GM12878 (cell line): ENCODE measurements at regions of chr15 and their contacts with region 1.

Region 1: GRCh38 chr15:40564591-40565332 is at the start of gene CCDC32:
- DNase-seq: peak; percentile 97
- ATAC-seq: peak; percentile 96
- H3K4me3 ChIP-seq: peak within 1 kb of the TSS; percentile 82
- H3K27ac ChIP-seq: peak within 1 kb of the TSS; percentile 97
- H3K4me1 ChIP-seq: peaks cover 8% of the 10 kb centered on the region
- H3K27me3 ChIP-seq: no peaks in the 10 kb centered on the region
- CTCF ChIP-seq: no peak
- EP300 ChIP-seq: 0 out of 4 replicates have a peak, but pooled peaks of 1 of the 2 experiments have one; percentile 23
- POLR2A ChIP-seq: peak; percentile 90
- RAD21 ChIP-seq: no peak
- polyA plus RNA-seq, gene CCDC32: 67.0 to 74.3 TPM

Region 2: GRCh38 chr15:40098489-40099261 is 466.1 kb before region 1 on chr15:
- CTCF ChIA-PET with region 1: no interaction called
- POLR2A ChIA-PET with region 1: no interaction called
- RAD21 ChIA-PET with region 1: no interaction called
- SMC1A ChIA-PET with region 1: no interaction called
- in situ Hi-C with region 1: no loop called
- intact Hi-C with region 1: no loop called
- DNase-seq: peak; percentile 84
- ATAC-seq: peak; percentile 80
- H3K4me3 ChIP-seq: peak overlapping the region; percentile 46
- H3K27ac ChIP-seq: peak overlapping the region; percentile 100
- H3K4me1 ChIP-seq: peaks cover 97% of the 10 kb centered on the region
- H3K27me3 ChIP-seq: no peaks in the 10 kb centered on the region
- CTCF ChIP-seq: no peak
- EP300 ChIP-seq: peak; percentile 98 to 99
- POLR2A ChIP-seq: peak; percentile 73
- RAD21 ChIP-seq: no peak

Region 3: DNA sequence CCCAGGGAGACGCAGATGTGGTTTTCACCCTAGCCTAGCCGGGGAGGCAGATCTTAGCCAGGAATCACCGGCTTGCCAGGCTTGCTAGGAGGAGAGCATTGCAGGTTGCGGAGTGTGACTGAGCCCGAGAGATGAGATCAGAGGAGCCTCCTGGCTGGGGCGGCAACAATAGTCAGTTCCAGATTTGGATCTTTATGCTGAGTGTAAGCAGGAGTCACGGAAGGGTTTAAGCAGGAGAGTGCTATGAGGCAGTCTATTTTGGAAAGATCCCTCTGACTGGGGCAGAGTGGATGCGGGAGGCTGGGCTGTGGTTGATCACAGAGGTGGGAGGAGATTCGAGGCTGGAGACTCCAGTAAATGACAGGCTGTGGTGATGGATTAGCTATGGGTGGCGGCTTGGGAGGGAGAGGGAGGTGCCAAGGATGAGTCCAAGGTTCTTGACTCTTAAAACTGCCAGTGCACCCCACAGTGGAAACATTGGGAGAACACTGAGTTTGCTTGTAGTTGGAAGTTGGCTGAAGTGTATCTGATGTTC is 134.4 kb before region 1 on chr15:
- CTCF ChIA-PET with region 1: no interaction called
- POLR2A ChIA-PET with region 1: no interaction called
- RAD21 ChIA-PET with region 1: no interaction called
- SMC1A ChIA-PET with region 1: no interaction called
- in situ Hi-C with region 1: no loop called
- intact Hi-C with region 1: no loop called
- DNase-seq: no peak
- ATAC-seq: no peak
- H3K4me3 ChIP-seq: no peak overlapping the region
- H3K27ac ChIP-seq: no peak overlapping the region
- H3K4me1 ChIP-seq: no peaks in the 10 kb centered on the region
- H3K27me3 ChIP-seq: peaks cover 2 to 11% of the 10 kb centered on the region in 2 experiments
- CTCF ChIP-seq: no peak
- EP300 ChIP-seq: no peak
- POLR2A ChIP-seq: no peak
- RAD21 ChIP-seq: no peak

Region 4: DNA sequence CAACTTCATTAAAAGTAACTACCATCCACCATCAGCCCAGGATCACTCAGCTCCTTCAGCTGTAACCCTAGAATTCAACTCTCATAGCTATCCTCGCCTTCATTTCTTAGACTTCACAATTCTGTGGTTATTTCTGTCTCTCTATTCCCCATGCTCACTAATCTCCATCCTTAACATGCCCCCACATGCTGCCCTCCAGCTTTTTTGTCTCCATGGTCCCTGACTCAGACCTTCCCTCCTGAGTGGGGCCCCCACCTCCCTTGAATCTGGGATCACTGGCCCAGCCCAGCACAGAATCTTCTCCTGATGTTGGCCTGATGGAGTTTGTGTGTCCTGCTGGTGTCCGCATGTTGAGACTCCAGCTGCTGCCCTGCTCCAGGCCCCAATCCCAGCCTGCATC is 52.3 kb before region 1 on chr15:
- CTCF ChIA-PET with region 1: interaction called, 27 read pairs
- POLR2A ChIA-PET with region 1: no interaction called
- RAD21 ChIA-PET with region 1: interaction called, 3 read pairs
- SMC1A ChIA-PET with region 1: interaction called, 3 read pairs
- in situ Hi-C with region 1: no loop called
- intact Hi-C with region 1: no loop called
- DNase-seq: no peak
- ATAC-seq: no peak
- H3K4me3 ChIP-seq: no peak overlapping the region
- H3K27ac ChIP-seq: no peak overlapping the region
- H3K4me1 ChIP-seq: peaks cover 9% of the 10 kb centered on the region
- H3K27me3 ChIP-seq: no peaks in the 10 kb centered on the region
- CTCF ChIP-seq: no peak
- EP300 ChIP-seq: no peak
- POLR2A ChIP-seq: no peak
- RAD21 ChIP-seq: no peak

Region 5: DNA sequence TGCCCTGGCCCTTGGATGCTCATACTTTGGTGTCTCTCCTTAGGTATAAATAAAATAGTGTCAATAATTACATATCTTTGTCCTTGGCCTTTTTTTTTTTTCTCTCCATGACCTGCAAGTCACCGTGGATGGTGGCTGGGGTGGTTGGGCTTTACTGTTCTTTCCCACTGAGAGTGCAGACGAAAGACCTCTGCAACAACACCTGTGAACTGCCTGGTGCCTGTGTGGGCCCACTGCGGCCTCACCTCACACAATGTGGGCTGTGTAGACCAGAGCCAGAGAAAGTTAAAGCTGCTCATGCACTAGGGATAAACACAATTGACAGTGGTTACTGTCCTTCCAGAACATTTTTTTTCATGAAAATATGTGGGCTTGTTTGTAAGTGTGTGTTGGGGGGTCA is 38.9 kb before region 1 on chr15:
- CTCF ChIA-PET with region 1: interaction called, 27 read pairs
- POLR2A ChIA-PET with region 1: interaction called, 6 read pairs
- RAD21 ChIA-PET with region 1: interaction called, 11 read pairs
- SMC1A ChIA-PET with region 1: interaction called, 7 read pairs
- in situ Hi-C with region 1: no loop called
- intact Hi-C with region 1: loop called (anchors 5 kb)
- DNase-seq: no peak
- ATAC-seq: no peak
- H3K4me3 ChIP-seq: no peak overlapping the region
- H3K27ac ChIP-seq: no peak overlapping the region
- H3K4me1 ChIP-seq: peaks cover 6% of the 10 kb centered on the region
- H3K27me3 ChIP-seq: no peaks in the 10 kb centered on the region
- CTCF ChIP-seq: no peak
- EP300 ChIP-seq: no peak
- POLR2A ChIP-seq: no peak
- RAD21 ChIP-seq: no peak

Region 6: GRCh38 chr15:40543631-40544294 is 21.0 kb before region 1 on chr15:
- CTCF ChIA-PET with region 1: interaction called, 18 read pairs
- POLR2A ChIA-PET with region 1: interaction called, 15 read pairs
- RAD21 ChIA-PET with region 1: interaction called, 14 read pairs
- SMC1A ChIA-PET with region 1: interaction called, 24 read pairs
- in situ Hi-C with region 1: no loop called
- intact Hi-C with region 1: loop called (anchors 2 kb)
- DNase-seq: peak; percentile 94
- ATAC-seq: peak; percentile 91
- H3K4me3 ChIP-seq: peak overlapping the region; percentile 24; the same call in 1 of the 2 replicates
- H3K27ac ChIP-seq: peak overlapping the region; percentile 73
- H3K4me1 ChIP-seq: peaks cover 57% of the 10 kb centered on the region
- H3K27me3 ChIP-seq: no peaks in the 10 kb centered on the region
- CTCF ChIP-seq: no peak
- EP300 ChIP-seq: peak; percentile 94 to 95
- POLR2A ChIP-seq: no peak
- RAD21 ChIP-seq: 0 out of 2 replicates have a peak, but pooled peaks have one; percentile 9

Region 7: GRCh38 chr15:40550341-40551037 is 14.3 kb before region 1 on chr15:
- CTCF ChIA-PET with region 1: interaction called, 18 read pairs
- POLR2A ChIA-PET with region 1: interaction called, 47 read pairs
- RAD21 ChIA-PET with region 1: interaction called, 39 read pairs
- SMC1A ChIA-PET with region 1: interaction called, 60 read pairs
- in situ Hi-C with region 1: no loop called
- intact Hi-C with region 1: loop called (anchors 2 kb)
- DNase-seq: peak; percentile 94
- ATAC-seq: peak; percentile 89
- H3K4me3 ChIP-seq: peak overlapping the region; percentile 17; the same call in 1 of the 2 replicates
- H3K27ac ChIP-seq: peak overlapping the region; percentile 89
- H3K4me1 ChIP-seq: peaks cover 78% of the 10 kb centered on the region
- H3K27me3 ChIP-seq: no peaks in the 10 kb centered on the region
- CTCF ChIP-seq: no peak
- EP300 ChIP-seq: peak; percentile 93 to 95
- POLR2A ChIP-seq: no peak
- RAD21 ChIP-seq: no peak

Region 8: DNA sequence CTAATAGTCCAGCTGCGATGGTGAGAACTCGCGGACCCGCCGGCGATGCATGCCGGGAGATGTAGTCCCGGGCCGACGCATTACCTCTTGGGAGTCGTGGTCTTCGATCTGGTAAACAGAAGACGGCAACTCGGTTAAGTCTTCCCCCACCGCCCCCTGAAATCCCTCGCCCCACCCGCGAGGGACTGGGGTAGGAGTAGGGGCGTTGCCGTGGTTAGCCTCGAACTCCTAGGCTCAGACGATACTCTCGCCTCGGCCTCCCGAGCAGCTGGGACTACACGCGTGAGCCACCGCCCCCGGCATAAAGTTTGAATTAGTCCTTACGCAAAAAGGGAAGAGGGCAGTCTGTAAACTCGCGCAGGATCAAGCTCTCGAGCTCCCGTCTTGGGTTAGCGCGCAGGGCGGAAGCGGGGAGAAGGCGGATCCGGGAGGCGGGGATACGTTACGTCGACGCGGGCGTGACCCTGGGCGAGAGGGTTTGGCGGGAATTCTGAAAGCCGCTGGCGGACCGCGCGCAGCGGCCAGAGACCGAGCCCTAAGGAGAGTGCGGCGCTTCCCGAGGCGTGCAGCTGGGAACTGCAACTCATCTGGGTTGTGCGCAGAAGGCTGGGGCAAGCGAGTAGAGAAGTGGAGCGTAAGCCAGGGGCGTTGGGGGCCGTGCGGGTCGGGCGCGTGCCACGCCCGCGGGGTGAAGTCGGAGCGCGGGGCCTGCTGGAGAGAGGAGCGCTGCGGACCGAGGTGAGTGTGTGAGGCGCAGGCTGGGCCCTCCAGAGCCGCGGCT is 130.1 kb after region 1 on chr15 and contains the start of gene RAD51:
- CTCF ChIA-PET with region 1: interaction called, 6 read pairs
- POLR2A ChIA-PET with region 1: interaction called, 14 read pairs
- RAD21 ChIA-PET with region 1: interaction called, 9 read pairs
- SMC1A ChIA-PET with region 1: no interaction called
- in situ Hi-C with region 1: no loop called
- intact Hi-C with region 1: no loop called
- DNase-seq: peak; percentile 84
- ATAC-seq: peak; percentile 95
- H3K4me3 ChIP-seq: peak within 1 kb of the TSS; percentile 96
- H3K27ac ChIP-seq: peak within 1 kb of the TSS; percentile 86
- H3K4me1 ChIP-seq: peaks cover 2% of the 10 kb centered on the region
- H3K27me3 ChIP-seq: no peaks in the 10 kb centered on the region
- CTCF ChIP-seq: no peak
- EP300 ChIP-seq: 0 out of 4 replicates have a peak, but pooled peaks of 1 of the 2 experiments have one; percentile 40
- POLR2A ChIP-seq: peak; percentile 82
- RAD21 ChIP-seq: no peak
- polyA plus RNA-seq, gene RAD51: 13.1 to 23.6 TPM

Region 9: GRCh38 chr15:40985541-40986330 is 421.0 kb after region 1 on chr15:
- CTCF ChIA-PET with region 1: no interaction called
- POLR2A ChIA-PET with region 1: interaction called, 10 read pairs
- RAD21 ChIA-PET with region 1: no interaction called
- SMC1A ChIA-PET with region 1: no interaction called
- in situ Hi-C with region 1: no loop called
- intact Hi-C with region 1: no loop called
- DNase-seq: no peak
- ATAC-seq: no peak
- H3K4me3 ChIP-seq: no peak overlapping the region
- H3K27ac ChIP-seq: no peak overlapping the region
- H3K4me1 ChIP-seq: no peaks in the 10 kb centered on the region
- H3K27me3 ChIP-seq: no peaks in the 10 kb centered on the region
- CTCF ChIP-seq: no peak
- EP300 ChIP-seq: no peak
- POLR2A ChIP-seq: no peak
- RAD21 ChIP-seq: no peak